Aorta (tissue), 5 donors: ENCODE measurements at regions of chr22 and their contacts with region 1.

Region 1: DNA sequence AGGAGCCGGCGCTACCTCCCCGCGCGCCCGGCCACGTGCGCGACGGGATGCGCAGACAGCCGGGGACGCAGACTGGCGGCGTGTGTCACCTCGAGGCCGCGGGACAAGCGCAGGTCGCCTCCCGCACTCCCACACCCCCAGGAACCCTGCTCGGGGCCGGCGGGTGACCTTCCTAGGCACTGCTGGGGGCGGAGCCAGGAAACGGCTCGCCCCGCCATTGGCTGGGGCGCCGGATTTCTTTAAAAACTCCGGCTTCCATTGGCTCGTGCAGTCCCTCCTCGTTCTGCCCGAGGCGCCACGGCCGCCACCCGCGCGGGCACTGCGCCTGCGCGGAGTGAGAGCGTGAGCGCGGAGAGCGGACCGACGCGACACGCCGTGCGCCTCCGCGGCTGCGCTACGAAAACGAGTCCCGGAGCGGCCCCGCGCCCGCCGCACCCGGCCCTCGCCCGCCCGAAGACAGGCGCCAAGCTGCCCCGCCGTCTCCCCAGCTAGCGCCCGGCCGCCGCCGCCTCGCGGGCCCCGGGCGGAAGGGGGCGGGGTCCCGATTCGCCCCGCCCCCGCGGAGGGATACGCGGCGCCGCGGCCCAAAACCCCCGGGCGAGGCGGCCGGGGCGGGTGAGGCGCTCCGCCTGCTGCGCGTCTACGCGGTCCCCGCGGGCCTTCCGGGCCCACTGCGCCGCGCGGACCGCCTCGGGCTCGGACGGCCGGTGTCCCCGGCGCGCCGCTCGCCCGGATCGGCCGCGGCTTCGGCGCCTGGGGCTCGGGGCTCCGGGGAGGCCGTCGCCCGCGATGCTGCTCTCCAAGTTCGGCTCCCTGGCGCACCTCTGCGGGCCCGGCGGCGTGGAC is at the start of gene PIM3:
- DNase-seq: peak; percentile 95 to 96
- ATAC-seq: peak; percentile 88
- H3K4me3 ChIP-seq: peak within 1 kb of the TSS; percentile 81 to 86
- H3K27ac ChIP-seq: peak within 1 kb of the TSS in 1 of 2 donors; percentile 60
- H3K4me1 ChIP-seq: no peaks in the 10 kb centered on the region
- H3K27me3 ChIP-seq: no peaks in the 10 kb centered on the region
- total RNA-seq, gene PIM3: 41.4 to 74.9 TPM

Region 2: GRCh38 chr22:49827853-49828598 is 132.4 kb before region 1 on chr22 and contains the start of gene BRD1:
- intact Hi-C with region 1: no loop called
- DNase-seq: peak; percentile 72 to 87
- ATAC-seq: peak; percentile 65
- H3K4me3 ChIP-seq: peak within 1 kb of the TSS; percentile 84 to 94
- H3K27ac ChIP-seq: peak within 1 kb of the TSS; percentile 77 to 91
- H3K4me1 ChIP-seq: peaks cover 0 to 3% of the 10 kb centered on the region in 2 donors
- H3K27me3 ChIP-seq: no peaks in the 10 kb centered on the region
- total RNA-seq, gene BRD1: 26.7 to 32.2 TPM

Region 3: GRCh38 chr22:50200461-50201190 is 240.2 kb after region 1 on chr22 and contains the start of gene SELENOO:
- intact Hi-C with region 1: loop called in 1 of 2 experiments (anchors 10 kb)
- DNase-seq: peak; percentile 95 to 98
- ATAC-seq: peak; percentile 94
- H3K4me3 ChIP-seq: peak within 1 kb of the TSS; percentile 72 to 92
- H3K27ac ChIP-seq: peak within 1 kb of the TSS in 1 of 2 donors; percentile 35
- H3K4me1 ChIP-seq: no peaks in the 10 kb centered on the region
- H3K27me3 ChIP-seq: no peaks in the 10 kb centered on the region
- total RNA-seq, gene SELENOO: 14.2 to 21.6 TPM